ENCODE measurements at regions of chr17 and their contacts with region 1.

Region 1: DNA sequence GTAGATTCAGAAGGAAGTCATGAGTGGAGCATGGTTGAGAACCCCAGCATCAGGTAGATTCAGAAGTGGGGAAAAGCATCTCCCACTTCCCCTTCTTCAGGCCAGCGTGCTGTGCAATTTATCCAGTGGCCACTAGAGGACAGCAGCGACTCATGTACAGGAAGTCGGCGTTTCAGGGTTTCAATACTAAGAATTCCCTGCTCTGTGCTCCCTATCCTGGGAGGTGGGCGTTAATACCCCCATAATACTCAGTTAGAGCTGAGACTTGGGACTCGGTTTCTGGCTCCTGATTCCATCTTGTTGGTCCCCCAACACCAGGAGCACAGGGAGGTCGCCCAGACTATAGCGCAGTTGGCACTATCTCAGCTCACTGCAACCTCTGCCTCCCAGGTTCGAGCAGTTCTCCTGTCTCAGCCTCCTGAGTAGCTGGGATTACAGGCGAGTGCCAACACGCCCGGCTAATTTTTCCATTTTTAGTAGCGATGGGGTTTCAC is 75.3 kb upstream of the AMZ2 start:
- DNase-seq: peak; percentile 74 to 78
- H3K4me3 ChIP-seq: no peak overlapping the region
- H3K27ac ChIP-seq: no peak overlapping the region
- H3K4me1 ChIP-seq: peaks cover 0 to 8% of the 10 kb centered on the region in 2 donors
- H3K27me3 ChIP-seq: no peaks in the 10 kb centered on the region
- CTCF ChIP-seq: peak; percentile 95 to 99 (median 98)
- POLR2A ChIP-seq: no peak

Region 2: DNA sequence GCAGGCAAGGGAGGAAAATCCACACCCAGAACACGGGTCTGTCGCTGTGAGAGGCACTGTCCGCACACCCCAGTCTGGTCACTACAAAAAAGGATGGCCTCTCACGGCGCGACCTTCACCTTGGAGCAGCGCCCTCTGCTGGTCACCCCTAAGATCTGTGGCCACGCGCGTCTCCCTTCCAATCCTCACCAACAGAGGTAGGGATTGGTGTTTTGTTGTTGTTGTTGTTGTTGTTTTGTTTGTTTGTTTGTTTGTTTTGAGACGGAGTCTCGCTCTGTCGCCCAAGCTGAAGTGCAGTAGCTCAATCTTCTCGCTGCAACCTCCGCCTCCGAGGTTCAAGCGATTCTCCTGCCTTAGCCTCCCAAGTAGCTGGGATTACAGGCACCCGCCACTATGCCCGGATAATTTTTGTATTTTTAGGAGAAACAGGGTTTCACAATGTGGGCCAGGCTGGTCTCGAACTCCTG is 161.3 kb before region 1 on chr17:
- intact Hi-C with region 1: no loop called
- DNase-seq: peak; percentile 39 to 54
- H3K4me3 ChIP-seq: no peak overlapping the region
- H3K27ac ChIP-seq: no peak overlapping the region
- H3K4me1 ChIP-seq: no peaks in the 10 kb centered on the region
- H3K27me3 ChIP-seq: no peaks in the 10 kb centered on the region
- CTCF ChIP-seq: peak; percentile 44 to 69 (median 56)
- POLR2A ChIP-seq: no peak

Region 3: DNA sequence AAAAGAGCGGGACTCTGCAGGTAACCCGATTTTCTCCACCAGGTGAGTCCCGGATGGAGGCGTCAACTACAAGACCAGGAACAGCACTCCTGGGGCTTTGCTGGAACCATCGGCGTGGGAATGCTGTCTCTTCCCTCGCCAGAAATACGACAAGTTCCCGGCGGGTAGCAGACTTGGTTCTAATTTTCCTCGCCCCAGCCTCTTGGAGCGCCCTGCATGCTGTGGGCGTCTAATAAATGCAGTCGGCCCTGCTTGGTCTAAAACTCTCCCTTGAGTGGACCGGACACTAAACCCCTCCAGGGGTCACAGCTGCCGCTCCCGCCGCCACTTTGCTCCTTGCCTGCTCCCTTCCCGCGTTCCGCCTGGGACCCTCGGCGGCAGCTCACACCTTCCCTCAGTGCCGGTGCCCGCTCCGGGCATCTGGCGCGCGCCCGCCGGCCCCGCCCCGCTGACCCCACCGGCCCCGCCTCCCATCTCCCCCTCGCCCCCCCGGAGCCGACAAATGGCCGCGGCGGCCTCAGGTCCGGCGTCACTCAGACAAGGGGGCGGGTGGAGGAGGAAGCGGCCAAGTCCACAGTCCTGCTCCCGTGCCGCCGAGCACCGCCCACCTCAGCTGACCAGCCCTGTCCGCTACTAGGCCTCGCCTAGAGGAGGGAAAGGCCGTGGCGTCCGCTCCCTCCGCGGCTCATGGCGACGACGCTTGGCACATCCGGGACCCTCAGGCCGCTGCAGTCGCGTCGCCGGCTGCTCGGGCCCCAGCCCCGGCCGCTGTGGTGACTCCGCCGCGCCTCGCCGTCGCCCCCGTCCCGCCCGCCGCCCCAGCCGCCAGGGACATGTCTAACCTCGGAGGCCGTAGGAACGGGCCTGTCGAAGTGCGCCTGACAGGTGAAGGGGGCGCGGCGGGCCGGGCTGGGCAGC is 71.2 kb before region 1 on chr17:
- intact Hi-C with region 1: no loop called
- DNase-seq: peak; percentile 97 to 99
- H3K4me3 ChIP-seq: peak overlapping the region; percentile 63 to 94 (median 88)
- H3K27ac ChIP-seq: peak overlapping the region; percentile 84 to 92 (median 89)
- H3K4me1 ChIP-seq: peaks cover 16 to 17% of the 10 kb centered on the region in 2 donors
- H3K27me3 ChIP-seq: no peaks in the 10 kb centered on the region
- CTCF ChIP-seq: peak in 1 of 6 experiments; percentile 22
- POLR2A ChIP-seq: peak; percentile 91 to 99

Region 4: GRCh38 chr17:68133346-68134045 is 39.0 kb before region 1 on chr17:
- intact Hi-C with region 1: no loop called
- DNase-seq: peak; percentile 24 to 57
- H3K4me3 ChIP-seq: no peak overlapping the region
- H3K27ac ChIP-seq: peak overlapping the region in 2 of 3 donors; percentile 41 to 50
- H3K4me1 ChIP-seq: peaks cover 3 to 6% of the 10 kb centered on the region in 2 donors
- H3K27me3 ChIP-seq: no peaks in the 10 kb centered on the region
- CTCF ChIP-seq: no peak
- POLR2A ChIP-seq: no peak

Region 5: GRCh38 chr17:68468334-68468733 is 295.8 kb after region 1 on chr17:
- intact Hi-C with region 1: loop called (anchors 5 kb)
- DNase-seq: no peak
- H3K4me3 ChIP-seq: no peak overlapping the region
- H3K27ac ChIP-seq: no peak overlapping the region
- H3K4me1 ChIP-seq: no peaks in the 10 kb centered on the region
- H3K27me3 ChIP-seq: no peaks in the 10 kb centered on the region
- CTCF ChIP-seq: no peak
- POLR2A ChIP-seq: no peak

Measured in thyroid gland (tissue), 4 donors.